Activated naive CD8-positive, alpha-beta T cell treated with anti-CD3 and anti-CD28 coated beads, Interleukin-2, amount 10 ng/mL, durations not matched to agents 7 days and 5 days (primary cell): ENCODE measurements at regions of chr10 and their contacts with region 1.

Region 1: GRCh38 chr10:110871298-110872084 is at the start of gene PDCD4:
- DNase-seq: peak; percentile 93
- ATAC-seq: peak; percentile 79
- H3K4me3 Mint-ChIP-seq: peak within 1 kb of the TSS; percentile 98
- H3K27ac Mint-ChIP-seq: peak within 1 kb of the TSS; percentile 97
- H3K4me1 Mint-ChIP-seq: peaks cover 66% of the 10 kb centered on the region
- H3K27me3 Mint-ChIP-seq: no peaks in the 10 kb centered on the region
- total RNA-seq, gene PDCD4: 236 to 237 TPM

Region 2: GRCh38 chr10:110803830-110804338 is 67.6 kb before region 1 on chr10:
- POLR2A ChIA-PET with region 1: interaction called, 19 read pairs
- DNase-seq: peak; percentile 42
- ATAC-seq: peak; percentile 74
- H3K4me3 Mint-ChIP-seq: peak overlapping the region; percentile 46
- H3K27ac Mint-ChIP-seq: peak overlapping the region; percentile 80
- H3K4me1 Mint-ChIP-seq: peaks cover 35% of the 10 kb centered on the region
- H3K27me3 Mint-ChIP-seq: no peaks in the 10 kb centered on the region

Region 3: GRCh38 chr10:110852255-110852896 is 19.1 kb before region 1 on chr10:
- POLR2A ChIA-PET with region 1: interaction called, 53 read pairs
- DNase-seq: no peak
- ATAC-seq: peak; percentile 44
- H3K4me3 Mint-ChIP-seq: peak overlapping the region; percentile 63
- H3K27ac Mint-ChIP-seq: no peak overlapping the region
- H3K4me1 Mint-ChIP-seq: peaks cover 57% of the 10 kb centered on the region
- H3K27me3 Mint-ChIP-seq: no peaks in the 10 kb centered on the region

Region 4: GRCh38 chr10:110857265-110858158 is 14.0 kb before region 1 on chr10:
- POLR2A ChIA-PET with region 1: interaction called, 53 read pairs
- DNase-seq: no peak
- ATAC-seq: no peak
- H3K4me3 Mint-ChIP-seq: peak overlapping the region; percentile 39
- H3K27ac Mint-ChIP-seq: peak overlapping the region; percentile 86
- H3K4me1 Mint-ChIP-seq: peaks cover 67% of the 10 kb centered on the region
- H3K27me3 Mint-ChIP-seq: no peaks in the 10 kb centered on the region

Region 5: GRCh38 chr10:110898391-110898790 is 26.9 kb after region 1 on chr10:
- POLR2A ChIA-PET with region 1: no interaction called
- DNase-seq: no peak
- ATAC-seq: no peak
- H3K4me3 Mint-ChIP-seq: no peak overlapping the region
- H3K27ac Mint-ChIP-seq: no peak overlapping the region
- H3K4me1 Mint-ChIP-seq: peaks cover 24% of the 10 kb centered on the region
- H3K27me3 Mint-ChIP-seq: no peaks in the 10 kb centered on the region

Region 6: GRCh38 chr10:110918643-110919363 is 47.3 kb after region 1 on chr10 and contains the start of gene BBIP1:
- POLR2A ChIA-PET with region 1: interaction called, 11 read pairs
- DNase-seq: peak; percentile 91
- ATAC-seq: peak; percentile 94
- H3K4me3 Mint-ChIP-seq: peak within 1 kb of the TSS; percentile 96
- H3K27ac Mint-ChIP-seq: peak within 1 kb of the TSS; percentile 97
- H3K4me1 Mint-ChIP-seq: peaks cover 27% of the 10 kb centered on the region
- H3K27me3 Mint-ChIP-seq: no peaks in the 10 kb centered on the region
- total RNA-seq, gene BBIP1: 33.0 to 33.8 TPM

Region 7: GRCh38 chr10:111004016-111004415 is 132.5 kb after region 1 on chr10:
- POLR2A ChIA-PET with region 1: no interaction called
- DNase-seq: no peak
- ATAC-seq: no peak
- H3K4me3 Mint-ChIP-seq: no peak overlapping the region
- H3K27ac Mint-ChIP-seq: no peak overlapping the region
- H3K4me1 Mint-ChIP-seq: no peaks in the 10 kb centered on the region
- H3K27me3 Mint-ChIP-seq: no peaks in the 10 kb centered on the region